ENCODE measurements at regions of chr22 and their contacts with region 1.

Region 1: GRCh38 chr22:42090596-42091454 is at the start of gene NDUFA6:
- DNase-seq: peak; percentile 99
- ATAC-seq: peak; percentile 87
- H3K4me3 ChIP-seq: peak within 1 kb of the TSS; percentile 74 to 95 (median 91)
- H3K4me3 Mint-ChIP-seq: peak within 1 kb of the TSS; percentile 98
- H3K27ac ChIP-seq: peak within 1 kb of the TSS; percentile 89 to 96
- H3K27ac Mint-ChIP-seq: peak within 1 kb of the TSS; percentile 99
- H3K4me1 ChIP-seq: peaks cover 17 to 22% of the 10 kb centered on the region in 2 donors
- H3K4me1 Mint-ChIP-seq: peaks cover 31% of the 10 kb centered on the region
- H3K27me3 ChIP-seq: no peaks in the 10 kb centered on the region
- H3K27me3 Mint-ChIP-seq: no peaks in the 10 kb centered on the region
- CTCF ChIP-seq: peak; percentile 92
- total RNA-seq, gene NDUFA6: 47.8 and 51.5 TPM in 2 replicates

Region 2: DNA sequence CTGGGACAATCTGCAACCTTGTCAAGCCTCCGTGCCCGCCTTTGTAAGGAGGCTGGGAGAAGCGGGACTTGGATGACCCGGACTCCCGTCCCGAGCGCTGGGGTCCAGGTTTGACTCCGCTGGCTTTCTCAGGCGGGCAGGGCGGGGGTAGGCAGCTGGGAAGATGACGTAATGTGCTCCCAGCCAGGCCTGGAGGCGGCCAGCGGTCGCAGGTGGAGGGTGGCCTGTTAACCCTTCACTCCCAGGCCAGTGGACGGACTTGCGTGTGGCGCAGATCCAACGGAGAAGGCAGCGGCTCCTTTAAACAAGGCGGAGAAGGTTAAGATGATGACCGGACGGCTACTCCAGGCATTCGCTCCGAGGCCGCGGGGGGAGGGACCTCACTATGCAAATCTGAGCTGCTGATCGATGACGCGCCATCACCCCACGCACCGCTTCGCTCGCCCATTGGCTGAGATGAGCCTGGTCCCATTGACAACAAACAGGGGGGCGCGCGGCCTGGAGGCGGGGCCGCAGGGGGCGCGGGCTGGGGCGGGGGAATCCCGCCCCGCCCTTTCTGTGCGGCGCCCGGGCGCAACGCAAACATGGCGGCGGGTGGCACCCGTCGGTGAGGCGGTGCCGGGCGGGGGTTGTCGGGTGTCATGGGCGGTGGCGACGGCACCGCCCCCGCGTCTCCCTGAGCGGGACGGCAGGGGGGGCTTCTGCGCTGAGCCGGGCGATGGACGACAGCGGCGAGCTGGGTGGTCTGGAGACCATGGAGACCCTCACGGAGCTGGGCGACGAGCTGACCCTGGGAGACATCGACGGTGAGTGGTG is 258.1 kb before region 1 on chr22 and contains the start of gene SREBF2:
- CTCF ChIA-PET with region 1: no interaction called
- POLR2A ChIA-PET with region 1: interaction called, 3 read pairs
- intact Hi-C with region 1: loop called (anchors 2 kb)
- DNase-seq: peak; percentile 99
- ATAC-seq: peak; percentile 86
- H3K4me3 ChIP-seq: peak within 1 kb of the TSS; percentile 49 to 92 (median 90)
- H3K4me3 Mint-ChIP-seq: peak within 1 kb of the TSS; percentile 96
- H3K27ac ChIP-seq: peak within 1 kb of the TSS; percentile 99 to 100
- H3K27ac Mint-ChIP-seq: peak within 1 kb of the TSS; percentile 99
- H3K4me1 ChIP-seq: peaks cover 20 to 36% of the 10 kb centered on the region in 2 donors
- H3K4me1 Mint-ChIP-seq: peaks cover 55% of the 10 kb centered on the region
- H3K27me3 ChIP-seq: no peaks in the 10 kb centered on the region
- H3K27me3 Mint-ChIP-seq: no peaks in the 10 kb centered on the region
- CTCF ChIP-seq: no peak
- total RNA-seq, gene SREBF2: 287 and 304 TPM in 2 replicates

Region 3: DNA sequence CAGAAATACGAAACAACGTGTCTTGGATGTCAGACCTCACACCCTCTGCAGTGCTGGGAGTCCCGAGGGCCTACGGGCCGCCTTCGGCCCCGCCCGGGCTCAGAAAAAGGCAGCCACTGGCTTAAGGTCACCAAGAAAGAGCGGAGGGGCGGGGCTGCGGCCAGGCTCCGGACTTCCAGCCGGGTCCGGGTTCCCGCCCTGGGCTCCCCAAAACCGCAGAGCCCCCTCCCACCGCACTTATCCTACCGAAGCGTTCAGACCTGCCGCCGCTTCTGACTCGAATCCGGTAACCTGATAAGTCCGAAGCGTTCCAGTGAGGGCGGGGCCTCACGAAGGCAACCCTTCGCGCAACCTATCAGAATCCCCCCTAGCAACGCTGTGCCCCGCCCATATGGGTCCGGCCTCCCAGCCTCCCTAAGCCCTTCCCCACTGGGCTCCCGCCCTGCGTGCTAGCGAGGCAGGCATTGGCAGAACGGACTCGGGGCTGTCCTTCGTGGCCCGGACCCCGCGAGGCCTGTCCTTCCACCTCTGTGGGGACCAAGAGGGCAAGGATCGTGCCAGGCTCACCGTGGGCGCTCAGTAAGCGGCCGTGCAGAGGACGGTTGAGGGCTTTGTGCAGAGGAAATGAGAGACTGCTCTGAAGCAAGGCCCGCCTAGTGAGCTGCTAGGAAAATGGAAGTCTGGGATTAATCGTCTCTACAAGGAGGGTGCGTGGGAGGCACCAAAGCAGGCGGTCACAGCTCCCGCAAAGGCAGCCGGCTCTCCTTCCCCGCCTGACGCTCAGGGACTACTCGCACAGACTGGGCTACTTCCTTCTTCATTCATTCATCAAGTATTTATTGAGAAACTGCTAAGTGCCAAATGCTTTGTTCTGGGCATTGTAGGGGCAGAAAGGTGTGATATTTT is 20.1 kb before region 1 on chr22 and contains the start of gene NAGA:
- CTCF ChIA-PET with region 1: interaction called, 7 read pairs
- POLR2A ChIA-PET with region 1: interaction called, 11 read pairs
- intact Hi-C with region 1: loop called (anchors 1 kb)
- DNase-seq: peak; percentile 93
- ATAC-seq: peak; percentile 95
- H3K4me3 ChIP-seq: peak within 1 kb of the TSS; percentile 30 to 98 (median 82)
- H3K4me3 Mint-ChIP-seq: peak within 1 kb of the TSS; percentile 93
- H3K27ac ChIP-seq: peak within 1 kb of the TSS; percentile 64 to 69
- H3K27ac Mint-ChIP-seq: peak within 1 kb of the TSS; percentile 94
- H3K4me1 ChIP-seq: peaks cover 20 to 34% of the 10 kb centered on the region in 2 donors
- H3K4me1 Mint-ChIP-seq: peaks cover 46% of the 10 kb centered on the region
- H3K27me3 ChIP-seq: no peaks in the 10 kb centered on the region
- H3K27me3 Mint-ChIP-seq: no peaks in the 10 kb centered on the region
- CTCF ChIP-seq: no peak
- total RNA-seq, gene NAGA: 20.2 and 21.0 TPM in 2 replicates

Region 4: GRCh38 chr22:42169055-42169469 is 78.2 kb after region 1 on chr22:
- CTCF ChIA-PET with region 1: no interaction called
- POLR2A ChIA-PET with region 1: no interaction called
- intact Hi-C with region 1: loop called (anchors 2 kb)
- DNase-seq: peak; percentile 79
- ATAC-seq: peak; percentile 67
- H3K4me3 ChIP-seq: no peak overlapping the region
- H3K4me3 Mint-ChIP-seq: no peak overlapping the region
- H3K27ac ChIP-seq: no peak overlapping the region
- H3K27ac Mint-ChIP-seq: peak overlapping the region; percentile 61
- H3K4me1 ChIP-seq: peaks cover 12 to 31% of the 10 kb centered on the region in 2 donors
- H3K4me1 Mint-ChIP-seq: peaks cover 29% of the 10 kb centered on the region
- H3K27me3 ChIP-seq: no peaks in the 10 kb centered on the region
- H3K27me3 Mint-ChIP-seq: no peaks in the 10 kb centered on the region
- CTCF ChIP-seq: peak; percentile 83

Region 5: DNA sequence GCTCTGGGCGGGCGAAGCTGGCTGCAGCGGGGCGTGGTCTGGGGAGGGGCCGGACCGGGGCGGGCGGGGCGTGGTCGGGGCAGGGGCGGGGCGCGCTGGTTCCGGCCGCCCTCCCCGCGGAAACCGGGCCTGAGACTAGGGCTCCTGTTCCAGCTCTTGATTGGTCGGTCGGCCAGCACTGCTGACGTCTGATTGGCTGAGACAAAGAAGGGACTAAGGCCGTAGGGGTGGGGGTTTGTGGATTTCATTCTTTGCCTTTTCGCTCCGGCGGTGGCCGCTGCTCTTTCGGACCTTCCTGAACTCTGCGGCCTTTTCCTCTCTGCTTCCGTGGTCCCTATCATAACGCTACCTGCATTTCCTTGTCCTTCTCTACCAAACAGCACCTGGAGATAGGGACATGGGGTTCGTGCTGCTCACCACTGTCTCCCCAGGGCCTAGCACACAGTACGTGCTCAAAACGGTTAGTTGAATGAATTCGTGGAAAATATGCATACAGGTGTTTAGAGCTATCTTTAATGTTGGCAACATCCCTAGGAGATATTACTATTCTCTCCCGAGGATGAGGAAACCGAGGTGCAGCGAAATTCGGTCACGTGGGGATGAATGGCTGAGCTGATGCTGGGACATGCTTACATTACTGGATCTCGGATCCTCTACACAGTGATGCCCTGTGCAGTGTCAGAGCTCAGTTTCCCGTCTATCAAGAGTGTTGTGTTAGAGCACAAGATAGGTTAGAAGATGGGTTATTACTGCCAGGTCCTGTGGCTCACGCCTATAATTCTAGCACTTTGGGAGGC is 278.6 kb after region 1 on chr22:
- CTCF ChIA-PET with region 1: no interaction called
- POLR2A ChIA-PET with region 1: no interaction called
- intact Hi-C with region 1: loop called (anchors 1 kb)
- DNase-seq: peak; percentile 91
- ATAC-seq: peak; percentile 98
- H3K4me3 ChIP-seq: peak overlapping the region; percentile 58 to 90 (median 72)
- H3K4me3 Mint-ChIP-seq: peak overlapping the region; percentile 89
- H3K27ac ChIP-seq: no peak overlapping the region
- H3K27ac Mint-ChIP-seq: peak overlapping the region; percentile 72
- H3K4me1 ChIP-seq: peaks cover 17 to 28% of the 10 kb centered on the region in 2 donors
- H3K4me1 Mint-ChIP-seq: peaks cover 22% of the 10 kb centered on the region
- H3K27me3 ChIP-seq: peaks cover 0 to 52% (median 26%) of the 10 kb centered on the region in 4 experiments
- H3K27me3 Mint-ChIP-seq: peaks cover 38% of the 10 kb centered on the region
- CTCF ChIP-seq: no peak

Region 6: DNA sequence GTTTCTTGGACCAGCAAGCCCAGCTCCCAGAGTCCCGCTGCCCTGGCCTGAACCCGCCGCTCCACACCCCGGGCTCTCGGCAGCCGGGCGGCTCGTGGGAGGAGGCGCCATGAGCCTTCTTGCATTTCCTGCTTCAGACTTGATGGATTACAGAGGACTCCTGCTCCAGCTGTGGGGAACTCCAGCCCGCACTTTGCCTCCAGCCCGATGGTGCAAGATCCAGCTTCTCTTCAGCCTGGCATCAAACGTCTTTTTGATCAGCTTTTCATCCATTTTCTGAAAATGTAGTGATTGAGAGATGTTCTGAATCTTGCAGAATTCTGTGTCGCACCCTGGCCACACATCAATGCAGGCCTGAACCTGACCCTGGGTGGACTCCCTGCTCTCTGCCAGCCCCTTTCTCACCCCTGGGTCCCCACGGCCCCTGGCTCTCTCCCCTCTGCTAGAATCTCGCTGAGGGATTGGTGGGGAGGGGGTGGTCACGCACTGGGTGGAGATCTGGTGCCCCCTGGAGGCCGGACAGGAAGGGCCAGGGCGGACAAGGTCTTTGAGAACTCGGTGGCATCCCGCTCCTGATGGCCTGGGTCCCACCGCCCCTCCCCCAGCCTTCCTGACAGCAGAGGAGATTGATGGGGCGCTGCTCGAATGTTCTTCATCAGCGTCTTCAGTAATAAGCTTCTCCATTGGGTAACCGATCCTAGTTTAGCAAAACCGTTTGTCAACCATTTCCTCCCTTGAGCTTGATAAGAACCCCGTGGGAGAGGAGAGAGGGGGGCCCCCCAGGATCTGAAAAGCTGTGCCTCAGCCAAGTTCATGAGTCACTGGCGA is 353.5 kb after region 1 on chr22:
- CTCF ChIA-PET with region 1: interaction called, 57 read pairs
- POLR2A ChIA-PET with region 1: interaction called, 5 read pairs
- intact Hi-C with region 1: loop called (anchors 1 kb)
- DNase-seq: peak; percentile 81
- ATAC-seq: peak; percentile 67
- H3K4me3 ChIP-seq: peak overlapping the region in 4 of 5 experiments; percentile 14 to 40 (median 30)
- H3K4me3 Mint-ChIP-seq: peak overlapping the region; percentile 77
- H3K27ac ChIP-seq: no peak overlapping the region
- H3K27ac Mint-ChIP-seq: peak overlapping the region; percentile 53
- H3K4me1 ChIP-seq: peaks cover 33 to 34% of the 10 kb centered on the region in 2 donors
- H3K4me1 Mint-ChIP-seq: peaks cover 33% of the 10 kb centered on the region
- H3K27me3 ChIP-seq: peaks cover 0 to 49% (median 10%) of the 10 kb centered on the region in 4 experiments
- H3K27me3 Mint-ChIP-seq: peaks cover 10% of the 10 kb centered on the region
- CTCF ChIP-seq: peak; percentile 73

Region 7: GRCh38 chr22:42553475-42554361 is 462.9 kb after region 1 on chr22 and contains the start of gene SERHL2:
- CTCF ChIA-PET with region 1: no interaction called
- POLR2A ChIA-PET with region 1: interaction called, 15 read pairs
- intact Hi-C with region 1: no loop called
- DNase-seq: peak; percentile 92
- ATAC-seq: peak; percentile 95
- H3K4me3 ChIP-seq: peak within 1 kb of the TSS in 4 of 5 experiments; percentile 65 to 73 (median 70)
- H3K4me3 Mint-ChIP-seq: peak within 1 kb of the TSS; percentile 93
- H3K27ac ChIP-seq: peak within 1 kb of the TSS; percentile 62 to 69
- H3K27ac Mint-ChIP-seq: peak within 1 kb of the TSS; percentile 75
- H3K4me1 ChIP-seq: peaks cover 39 to 50% of the 10 kb centered on the region in 2 donors
- H3K4me1 Mint-ChIP-seq: peaks cover 46% of the 10 kb centered on the region
- H3K27me3 ChIP-seq: no peaks in the 10 kb centered on the region
- H3K27me3 Mint-ChIP-seq: no peaks in the 10 kb centered on the region
- CTCF ChIP-seq: no peak
- total RNA-seq, gene SERHL2: 5.0 and 5.5 TPM in 2 replicates

Region 8: GRCh38 chr22:42702675-42703074 is 611.9 kb after region 1 on chr22:
- CTCF ChIA-PET with region 1: no interaction called
- POLR2A ChIA-PET with region 1: no interaction called
- intact Hi-C with region 1: no loop called
- DNase-seq: no peak
- ATAC-seq: no peak
- H3K4me3 ChIP-seq: no peak overlapping the region
- H3K4me3 Mint-ChIP-seq: no peak overlapping the region
- H3K27ac ChIP-seq: no peak overlapping the region
- H3K27ac Mint-ChIP-seq: no peak overlapping the region
- H3K4me1 ChIP-seq: no peaks in the 10 kb centered on the region
- H3K4me1 Mint-ChIP-seq: peaks cover 3% of the 10 kb centered on the region
- H3K27me3 ChIP-seq: peaks cover 0 to 14% (median 0%) of the 10 kb centered on the region in 4 experiments
- H3K27me3 Mint-ChIP-seq: peaks cover 4% of the 10 kb centered on the region
- CTCF ChIP-seq: no peak